ENCODE measurements at regions of chr6 and their contacts with region 1.

Region 1: GRCh38 chr6:113858480-113859348 is 1.6 kb downstream of the MARCKS start:
- DNase-seq: peak; percentile 87
- ATAC-seq: peak; percentile 83
- H3K4me3 ChIP-seq: peak overlapping the region; percentile 90
- H3K27ac ChIP-seq: peak overlapping the region; percentile 94
- H3K4me1 ChIP-seq: peaks cover 5% of the 10 kb centered on the region
- H3K27me3 ChIP-seq: no peaks in the 10 kb centered on the region
- CTCF ChIP-seq: peak; percentile 83 to 89 (median 88)
- EP300 ChIP-seq: peak; percentile 69 to 77; a peak in 3 of 4 replicates
- POLR2A ChIP-seq: peak; percentile 95
- RAD21 ChIP-seq: peak; percentile 86

Region 2: GRCh38 chr6:112780498-112781096 is 1078.1 kb before region 1 on chr6:
- CTCF ChIA-PET with region 1: interaction called, 3 read pairs
- POLR2A ChIA-PET with region 1: no interaction called
- RAD21 ChIA-PET with region 1: interaction called, 7 read pairs
- SMC1A ChIA-PET with region 1: interaction called, 3 read pairs
- in situ Hi-C with region 1: no loop called
- intact Hi-C with region 1: loop called (anchors 5 kb)
- DNase-seq: peak; percentile 24
- ATAC-seq: peak; percentile 99
- H3K4me3 ChIP-seq: no peak overlapping the region
- H3K27ac ChIP-seq: no peak overlapping the region
- H3K4me1 ChIP-seq: no peaks in the 10 kb centered on the region
- H3K27me3 ChIP-seq: no peaks in the 10 kb centered on the region
- CTCF ChIP-seq: peak; percentile 67 to 82 (median 69)
- EP300 ChIP-seq: no peak
- POLR2A ChIP-seq: no peak
- RAD21 ChIP-seq: peak; percentile 95

Region 3: DNA sequence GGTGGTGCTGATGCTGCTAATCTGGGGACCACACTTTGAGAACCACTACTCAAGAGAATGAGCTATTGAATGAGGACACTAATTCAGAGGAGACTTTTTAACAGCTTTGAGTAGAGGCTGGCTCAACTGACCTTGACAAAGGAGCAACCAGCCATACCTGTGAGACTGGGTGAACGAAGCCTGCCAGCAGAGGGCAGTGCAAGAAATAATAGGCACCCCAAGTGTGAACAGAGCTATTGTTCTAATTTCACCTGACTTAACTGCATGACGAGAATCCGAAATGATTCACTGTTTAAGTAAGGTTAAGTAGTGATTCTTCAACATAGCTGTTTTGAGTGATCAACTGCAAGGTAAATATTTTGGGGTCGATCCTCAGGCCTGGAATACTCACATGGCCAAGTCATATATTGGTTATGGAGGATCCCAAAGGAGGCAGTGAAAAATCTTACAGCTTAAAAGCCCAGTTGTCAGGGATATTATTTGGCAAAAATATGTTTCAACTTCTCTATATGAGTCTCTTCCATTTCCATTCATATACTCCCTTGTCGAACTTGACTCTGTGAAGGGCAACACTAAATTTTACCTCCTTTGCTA is 552.1 kb before region 1 on chr6:
- CTCF ChIA-PET with region 1: interaction called, 16 read pairs
- POLR2A ChIA-PET with region 1: interaction called, 10 read pairs
- RAD21 ChIA-PET with region 1: interaction called, 22 read pairs
- SMC1A ChIA-PET with region 1: interaction called, 15 read pairs
- in situ Hi-C with region 1: loop called (anchors 5 kb)
- intact Hi-C with region 1: loop called (anchors 1 kb)
- DNase-seq: peak; percentile 57
- ATAC-seq: peak; percentile 100
- H3K4me3 ChIP-seq: no peak overlapping the region
- H3K27ac ChIP-seq: no peak overlapping the region
- H3K4me1 ChIP-seq: no peaks in the 10 kb centered on the region
- H3K27me3 ChIP-seq: no peaks in the 10 kb centered on the region
- CTCF ChIP-seq: peak; percentile 79 to 83 (median 81)
- EP300 ChIP-seq: no peak
- POLR2A ChIP-seq: no peak
- RAD21 ChIP-seq: peak; percentile 81

Region 4: GRCh38 chr6:113642714-113643406 is 215.9 kb before region 1 on chr6:
- CTCF ChIA-PET with region 1: interaction called, 15 read pairs
- POLR2A ChIA-PET with region 1: interaction called, 18 read pairs
- RAD21 ChIA-PET with region 1: interaction called, 142 read pairs
- SMC1A ChIA-PET with region 1: interaction called, 20 read pairs
- in situ Hi-C with region 1: no loop called
- intact Hi-C with region 1: loop called (anchors 1 kb)
- DNase-seq: no peak
- ATAC-seq: peak; percentile 81
- H3K4me3 ChIP-seq: peak overlapping the region; percentile 28; the same call in 1 of the 2 replicates
- H3K27ac ChIP-seq: peak overlapping the region; percentile 89
- H3K4me1 ChIP-seq: peaks cover 39% of the 10 kb centered on the region
- H3K27me3 ChIP-seq: no peaks in the 10 kb centered on the region
- CTCF ChIP-seq: no peak
- EP300 ChIP-seq: peak; percentile 83 to 88; a peak in 3 of 4 replicates
- POLR2A ChIP-seq: 0 out of 2 replicates have a peak, but pooled peaks have one; percentile 43
- RAD21 ChIP-seq: peak; percentile 25; the same call in 1 of the 2 replicates

Region 5: GRCh38 chr6:113763883-113764282 is 94.8 kb before region 1 on chr6:
- CTCF ChIA-PET with region 1: no interaction called
- POLR2A ChIA-PET with region 1: interaction called, 4 read pairs
- RAD21 ChIA-PET with region 1: interaction called, 6 read pairs
- SMC1A ChIA-PET with region 1: interaction called, 3 read pairs
- in situ Hi-C with region 1: no loop called
- intact Hi-C with region 1: loop called (anchors 2 kb)
- DNase-seq: peak; percentile 72
- ATAC-seq: peak; percentile 80
- H3K4me3 ChIP-seq: no peak overlapping the region
- H3K27ac ChIP-seq: peak overlapping the region; percentile 69
- H3K4me1 ChIP-seq: peaks cover 18% of the 10 kb centered on the region
- H3K27me3 ChIP-seq: no peaks in the 10 kb centered on the region
- CTCF ChIP-seq: no peak
- EP300 ChIP-seq: no peak
- POLR2A ChIP-seq: no peak
- RAD21 ChIP-seq: 0 out of 2 replicates have a peak, but pooled peaks have one; percentile 0

Region 6: DNA sequence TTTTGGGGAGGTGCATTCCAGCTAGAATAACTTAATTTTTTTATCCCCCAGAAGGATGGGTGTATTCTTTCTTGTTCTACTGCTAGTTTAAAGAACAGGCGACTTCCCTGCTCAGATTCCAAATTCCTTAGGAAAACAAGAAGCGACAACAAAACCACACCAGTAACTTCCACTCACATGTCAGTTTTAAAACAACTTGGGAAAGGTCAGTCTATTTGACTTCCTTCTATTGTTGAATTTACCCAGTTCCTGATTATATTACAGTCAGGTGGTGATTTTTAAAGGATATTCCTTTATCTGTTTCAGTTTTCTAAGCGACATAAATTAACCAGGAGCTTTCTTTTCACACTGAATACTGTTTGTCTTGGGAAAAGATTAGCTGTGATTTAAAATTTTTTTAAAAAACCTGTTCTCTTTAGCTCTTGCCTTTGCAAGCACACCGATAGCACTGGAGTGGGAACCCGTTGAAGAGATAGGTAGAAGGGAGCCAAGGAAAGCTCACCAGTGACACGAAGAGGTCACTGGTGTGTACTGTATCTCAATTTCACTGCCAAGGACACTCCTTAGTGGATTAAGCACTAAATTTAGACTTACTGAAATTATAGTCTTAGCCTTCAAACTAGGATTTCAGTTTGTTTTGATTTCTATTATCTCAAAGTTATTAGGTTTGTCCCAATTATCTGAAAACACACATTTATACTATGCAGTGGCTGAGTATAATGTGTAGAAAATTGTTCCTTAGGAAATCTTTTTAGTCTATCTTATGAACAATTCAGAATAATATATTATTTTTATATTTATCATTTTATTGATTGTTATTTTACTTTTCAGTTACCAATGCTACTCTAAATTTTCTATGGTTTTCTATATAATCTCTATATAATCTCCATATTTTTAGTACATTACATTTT is 20.7 kb after region 1 on chr6:
- CTCF ChIA-PET with region 1: interaction called, 13 read pairs
- POLR2A ChIA-PET with region 1: interaction called, 7 read pairs
- RAD21 ChIA-PET with region 1: interaction called, 21 read pairs
- SMC1A ChIA-PET with region 1: interaction called, 13 read pairs
- in situ Hi-C with region 1: no loop called
- intact Hi-C with region 1: no loop called
- DNase-seq: peak; percentile 47
- ATAC-seq: peak; percentile 99
- H3K4me3 ChIP-seq: no peak overlapping the region
- H3K27ac ChIP-seq: no peak overlapping the region
- H3K4me1 ChIP-seq: no peaks in the 10 kb centered on the region
- H3K27me3 ChIP-seq: no peaks in the 10 kb centered on the region
- CTCF ChIP-seq: peak; percentile 83 to 89 (median 84)
- EP300 ChIP-seq: no peak
- POLR2A ChIP-seq: no peak
- RAD21 ChIP-seq: peak; percentile 97

Measured in GM12878 (cell line).